Dendritic cell treated with granulocyte-macrophage colony-stimulating factor and Interleukin-4, amounts not matched to agents 40 ng/mL and 50 ng/mL, for 4 days (primary cell): ENCODE measurements at regions of chr4 and their contacts with region 1.

Region 1: GRCh38 chr4:112284662-112285411 is 867 bp downstream of the TIFA start:
- H3K4me3 Mint-ChIP-seq: peak overlapping the region; percentile 91
- H3K27ac Mint-ChIP-seq: peak overlapping the region; percentile 91
- H3K4me1 Mint-ChIP-seq: peaks cover 70% of the 10 kb centered on the region
- H3K27me3 Mint-ChIP-seq: no peaks in the 10 kb centered on the region

Region 2: GRCh38 chr4:112296949-112297880 is 12.4 kb after region 1 on chr4 and contains the start of gene ALPK1:
- intact Hi-C with region 1: loop called (anchors 1 kb)
- H3K4me3 Mint-ChIP-seq: peak within 1 kb of the TSS; percentile 82
- H3K27ac Mint-ChIP-seq: peak within 1 kb of the TSS; percentile 89
- H3K4me1 Mint-ChIP-seq: peaks cover 14% of the 10 kb centered on the region
- H3K27me3 Mint-ChIP-seq: no peaks in the 10 kb centered on the region

Region 3: DNA sequence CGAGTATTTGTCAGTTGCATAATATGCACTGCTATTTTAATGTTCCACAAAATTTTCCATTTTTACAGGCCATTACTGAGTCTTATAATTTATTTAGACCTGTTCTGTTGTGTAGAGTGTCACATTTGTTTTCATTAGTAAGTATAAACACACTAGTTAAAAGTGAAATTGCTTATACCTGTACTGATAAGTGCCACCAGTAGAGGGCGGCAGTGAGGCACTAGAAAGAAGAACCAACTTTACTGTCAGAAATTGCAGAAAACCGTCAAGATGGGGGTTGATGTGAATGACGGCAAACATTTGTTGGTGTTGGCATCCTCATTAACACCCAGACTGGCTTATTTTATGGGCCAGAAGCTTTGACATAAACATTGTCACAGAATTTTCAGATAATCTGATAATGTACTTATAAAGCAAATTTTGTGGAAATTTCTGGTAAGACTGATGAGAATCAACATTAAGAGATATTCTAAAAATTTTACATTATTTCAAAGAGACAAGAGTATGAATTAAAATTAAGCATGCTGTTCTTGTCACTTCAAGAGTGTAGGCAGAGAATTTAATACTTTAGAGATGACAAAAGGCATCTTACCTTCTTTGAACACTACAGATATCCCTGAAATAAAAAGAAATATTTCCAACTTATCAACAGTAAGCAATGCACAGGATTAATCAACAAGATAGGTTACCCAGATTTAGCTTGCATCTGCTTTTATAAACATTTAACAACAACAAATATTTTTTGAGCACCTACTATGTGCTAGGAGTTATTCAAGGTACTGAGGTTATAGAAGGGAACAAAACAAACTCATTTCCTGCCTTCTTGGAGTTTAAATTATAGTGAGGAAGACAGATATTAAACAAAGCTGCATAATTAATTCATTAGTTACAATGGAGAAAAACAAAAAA is 37.2 kb after region 1 on chr4:
- intact Hi-C with region 1: loop called (anchors 5 kb)
- H3K4me3 Mint-ChIP-seq: no peak overlapping the region
- H3K27ac Mint-ChIP-seq: no peak overlapping the region
- H3K4me1 Mint-ChIP-seq: peaks cover 28% of the 10 kb centered on the region
- H3K27me3 Mint-ChIP-seq: no peaks in the 10 kb centered on the region

Region 4: DNA sequence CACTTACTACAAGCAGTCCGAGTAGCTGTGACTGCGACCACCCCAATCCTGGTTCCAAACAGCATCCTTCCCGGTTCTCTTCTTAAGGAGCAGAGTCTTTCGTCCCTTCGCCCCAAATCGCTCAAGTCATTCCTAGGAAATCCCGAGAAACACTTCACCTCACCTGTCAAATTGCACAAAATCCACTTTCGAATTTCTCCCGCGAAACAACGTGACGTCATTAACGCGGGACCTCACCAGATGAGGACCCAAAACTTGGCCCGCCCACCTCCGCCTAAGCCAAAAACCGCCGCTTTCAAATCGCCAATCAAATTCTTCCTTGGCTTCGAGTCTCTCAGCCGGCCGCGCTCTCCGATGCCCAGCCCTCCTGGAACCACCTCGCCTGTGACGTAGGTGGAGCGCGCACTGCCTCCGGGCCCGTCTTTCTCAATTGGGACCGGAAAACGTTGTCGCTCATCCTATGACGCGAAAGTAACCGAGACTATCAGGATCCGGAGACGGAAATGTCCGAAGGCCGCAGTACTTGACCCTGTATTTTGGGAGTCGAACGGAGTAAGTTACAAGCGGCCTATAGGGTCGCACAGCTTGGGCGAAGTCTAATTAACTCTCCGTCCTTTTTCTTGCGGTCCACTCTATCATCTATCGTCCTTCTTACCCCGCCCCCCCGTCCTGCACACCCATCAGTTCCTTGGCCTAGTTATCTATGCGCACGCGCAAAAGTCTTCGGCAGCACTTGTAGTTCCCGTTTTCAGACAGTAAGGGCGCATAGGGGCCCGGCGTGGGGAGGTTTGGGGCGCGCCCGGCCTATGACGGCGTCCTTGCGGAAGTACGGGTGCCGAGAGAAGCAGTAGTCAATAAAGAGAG is 352.1 kb after region 1 on chr4 and contains the starts of genes LARP7 and ZGRF1:
- intact Hi-C with region 1: loop called (anchors 2 kb)
- H3K4me3 Mint-ChIP-seq: no peak within 1 kb of the TSS
- H3K27ac Mint-ChIP-seq: no peak within 1 kb of the TSS
- H3K4me1 Mint-ChIP-seq: peaks cover 20% of the 10 kb centered on the region
- H3K27me3 Mint-ChIP-seq: no peaks in the 10 kb centered on the region